ENCODE measurements at regions of chr2 and their contacts with region 1.

Region 1: GRCh38 chr2:223797811-223798721 is 39.3 kb downstream of the AP1S3 start:
- DNase-seq: no peak
- H3K4me3 ChIP-seq: no peak overlapping the region
- H3K4me3 Mint-ChIP-seq: no peak overlapping the region
- H3K27ac ChIP-seq: peak overlapping the region; percentile 20
- H3K27ac Mint-ChIP-seq: no peak overlapping the region
- H3K4me1 ChIP-seq: no peaks in the 10 kb centered on the region
- H3K4me1 Mint-ChIP-seq: peaks cover 0 to 5% (median 3%) of the 10 kb centered on the region in 3 donors
- H3K27me3 ChIP-seq: no peaks in the 10 kb centered on the region
- H3K27me3 Mint-ChIP-seq: peaks cover 0 to 2% of the 10 kb centered on the region in 2 donors

Region 2: DNA sequence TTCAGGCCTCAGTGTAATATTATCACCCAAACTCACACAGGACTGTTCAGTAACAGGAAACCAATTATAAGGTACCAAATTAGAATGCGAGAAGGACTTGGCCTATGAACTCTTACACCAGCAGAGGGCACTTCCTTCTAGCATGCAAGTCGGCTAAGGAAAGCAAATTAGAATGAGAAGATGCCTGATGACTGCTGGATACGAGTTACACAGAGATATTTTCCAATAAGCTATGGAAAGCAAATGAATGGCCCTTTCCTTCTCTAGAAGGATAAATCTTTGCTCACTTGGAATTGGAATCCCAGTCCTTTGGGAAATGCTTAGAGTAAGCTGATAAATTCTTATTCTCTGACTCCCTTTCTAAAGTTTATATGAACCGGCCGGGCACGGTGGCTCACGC is 70.5 kb before region 1 on chr2:
- CTCF ChIA-PET with region 1: interaction called, 31 read pairs
- POLR2A ChIA-PET with region 1: no interaction called
- DNase-seq: peak; percentile 5 to 56 (median 15)
- H3K4me3 ChIP-seq: no peak overlapping the region
- H3K4me3 Mint-ChIP-seq: no peak overlapping the region
- H3K27ac ChIP-seq: no peak overlapping the region
- H3K27ac Mint-ChIP-seq: no peak overlapping the region
- H3K4me1 ChIP-seq: no peaks in the 10 kb centered on the region
- H3K4me1 Mint-ChIP-seq: peaks cover 0 to 5% (median 0%) of the 10 kb centered on the region in 3 donors
- H3K27me3 ChIP-seq: no peaks in the 10 kb centered on the region
- H3K27me3 Mint-ChIP-seq: peaks cover 7 to 8% of the 10 kb centered on the region in 2 donors

Region 3: GRCh38 chr2:223760838-223761502 is 37.1 kb before region 1 on chr2:
- CTCF ChIA-PET with region 1: interaction called, 29 read pairs
- POLR2A ChIA-PET with region 1: no interaction called
- DNase-seq: peak in 4 of 5 donors; percentile 51 to 88 (median 62)
- H3K4me3 ChIP-seq: peak overlapping the region; percentile 4
- H3K4me3 Mint-ChIP-seq: peak overlapping the region; percentile 49 to 92 (median 74)
- H3K27ac ChIP-seq: peak overlapping the region; percentile 57
- H3K27ac Mint-ChIP-seq: peak overlapping the region; percentile 92 to 99 (median 97)
- H3K4me1 ChIP-seq: peaks cover 17% of the 10 kb centered on the region
- H3K4me1 Mint-ChIP-seq: peaks cover 25 to 42% (median 29%) of the 10 kb centered on the region in 3 donors
- H3K27me3 ChIP-seq: no peaks in the 10 kb centered on the region
- H3K27me3 Mint-ChIP-seq: no peaks in the 10 kb centered on the region

Region 4: GRCh38 chr2:223774193-223774592 is 23.9 kb before region 1 on chr2:
- CTCF ChIA-PET with region 1: no interaction called
- POLR2A ChIA-PET with region 1: no interaction called
- DNase-seq: no peak
- H3K4me3 ChIP-seq: no peak overlapping the region
- H3K4me3 Mint-ChIP-seq: no peak overlapping the region
- H3K27ac ChIP-seq: no peak overlapping the region
- H3K27ac Mint-ChIP-seq: no peak overlapping the region
- H3K4me1 ChIP-seq: no peaks in the 10 kb centered on the region
- H3K4me1 Mint-ChIP-seq: no peaks in the 10 kb centered on the region
- H3K27me3 ChIP-seq: no peaks in the 10 kb centered on the region
- H3K27me3 Mint-ChIP-seq: no peaks in the 10 kb centered on the region

Region 5: DNA sequence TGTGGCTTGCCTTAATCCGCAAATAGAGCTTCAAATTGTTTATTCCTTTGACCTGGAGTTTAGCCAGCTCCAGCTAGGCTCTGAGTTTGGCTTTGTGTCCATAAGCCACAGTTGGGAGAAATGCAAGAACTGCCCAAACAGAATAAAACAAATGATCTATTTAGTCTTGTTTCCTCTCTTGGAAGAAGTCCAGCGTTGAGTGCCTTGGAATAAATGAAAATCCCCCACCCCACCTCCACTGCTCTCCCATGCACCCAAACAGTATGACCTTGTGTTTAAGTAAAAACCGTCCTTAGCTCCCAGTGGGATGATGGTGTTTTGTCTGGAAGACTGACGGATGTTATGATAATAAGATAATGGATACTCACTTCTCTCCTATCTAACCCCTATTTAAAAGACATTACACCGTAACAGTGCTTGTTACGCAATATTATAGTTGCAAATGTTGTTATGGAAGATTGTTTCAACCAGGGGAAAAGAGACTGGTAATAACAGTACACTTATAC is 244.2 kb after region 1 on chr2:
- CTCF ChIA-PET with region 1: no interaction called
- POLR2A ChIA-PET with region 1: no interaction called
- DNase-seq: no peak
- H3K4me3 ChIP-seq: no peak overlapping the region
- H3K4me3 Mint-ChIP-seq: no peak overlapping the region
- H3K27ac ChIP-seq: no peak overlapping the region
- H3K27ac Mint-ChIP-seq: no peak overlapping the region
- H3K4me1 ChIP-seq: peaks cover 5% of the 10 kb centered on the region
- H3K4me1 Mint-ChIP-seq: peaks cover 14 to 18% (median 18%) of the 10 kb centered on the region in 3 donors
- H3K27me3 ChIP-seq: peaks cover 3% of the 10 kb centered on the region
- H3K27me3 Mint-ChIP-seq: peaks cover 27 to 74% of the 10 kb centered on the region in 2 donors